ENCODE measurements at regions of chr14 and their contacts with region 1.

Region 1: DNA sequence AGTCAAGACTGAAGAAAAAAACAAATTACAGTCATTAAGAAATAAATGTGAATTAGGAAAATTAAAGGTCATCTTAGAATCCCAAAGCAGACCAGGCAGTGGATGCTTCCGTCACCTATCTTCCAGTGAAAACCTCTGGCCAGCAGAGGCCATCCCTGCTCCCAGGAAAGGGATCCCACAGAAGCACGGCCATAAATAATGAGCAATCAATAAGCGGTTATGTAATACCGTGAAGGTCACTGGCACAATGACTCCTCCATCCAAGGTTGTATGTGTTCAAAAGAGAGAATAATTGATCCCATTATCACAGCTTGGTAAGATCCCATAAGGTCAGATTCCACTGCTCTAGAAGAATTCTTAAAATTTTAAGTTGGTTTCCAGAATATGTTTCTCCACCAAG is 85.7 kb downstream of the PPP2R5E start:
- DNase-seq: no peak
- H3K4me3 ChIP-seq: no peak overlapping the region
- H3K27ac ChIP-seq: no peak overlapping the region
- H3K27me3 ChIP-seq: no peaks in the 10 kb centered on the region
- CTCF ChIP-seq: no peak

Region 2: DNA sequence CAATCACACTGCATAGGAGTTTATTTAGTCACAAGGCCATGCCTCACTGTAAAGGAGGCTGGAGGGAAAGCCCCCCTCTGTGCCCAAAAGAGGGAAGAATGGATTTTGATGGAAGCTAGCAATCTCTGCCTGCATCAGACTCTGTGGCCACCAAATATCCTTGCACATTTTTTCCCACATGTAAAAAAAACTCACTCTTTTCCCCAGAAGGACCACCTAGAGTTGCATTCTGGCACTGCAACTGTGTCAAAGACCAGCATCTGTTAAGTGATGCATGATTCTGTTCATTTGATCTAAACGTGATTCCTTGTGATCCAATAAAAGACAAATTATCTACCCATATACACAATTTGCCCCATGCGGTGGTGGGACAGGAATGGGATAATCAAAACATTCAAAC is 245.3 kb before region 1 on chr14:
- CTCF ChIA-PET with region 1: no interaction called
- POLR2A ChIA-PET with region 1: no interaction called
- DNase-seq: no peak
- H3K4me3 ChIP-seq: no peak overlapping the region
- H3K27ac ChIP-seq: no peak overlapping the region
- H3K27me3 ChIP-seq: no peaks in the 10 kb centered on the region
- CTCF ChIP-seq: peak; percentile 29; the same call in 1 of the 2 replicates

Region 3: GRCh38 chr14:63432228-63432627 is 25.3 kb before region 1 on chr14:
- CTCF ChIA-PET with region 1: no interaction called
- POLR2A ChIA-PET with region 1: no interaction called
- DNase-seq: no peak
- H3K4me3 ChIP-seq: no peak overlapping the region
- H3K27ac ChIP-seq: no peak overlapping the region
- H3K27me3 ChIP-seq: no peaks in the 10 kb centered on the region
- CTCF ChIP-seq: no peak

Region 4: GRCh38 chr14:63470962-63471793 is 13.7 kb after region 1 on chr14:
- CTCF ChIA-PET with region 1: no interaction called
- POLR2A ChIA-PET with region 1: no interaction called
- DNase-seq: peak; percentile 41
- H3K4me3 ChIP-seq: no peak overlapping the region
- H3K27ac ChIP-seq: no peak overlapping the region
- H3K27me3 ChIP-seq: no peaks in the 10 kb centered on the region
- CTCF ChIP-seq: no peak

Region 5: DNA sequence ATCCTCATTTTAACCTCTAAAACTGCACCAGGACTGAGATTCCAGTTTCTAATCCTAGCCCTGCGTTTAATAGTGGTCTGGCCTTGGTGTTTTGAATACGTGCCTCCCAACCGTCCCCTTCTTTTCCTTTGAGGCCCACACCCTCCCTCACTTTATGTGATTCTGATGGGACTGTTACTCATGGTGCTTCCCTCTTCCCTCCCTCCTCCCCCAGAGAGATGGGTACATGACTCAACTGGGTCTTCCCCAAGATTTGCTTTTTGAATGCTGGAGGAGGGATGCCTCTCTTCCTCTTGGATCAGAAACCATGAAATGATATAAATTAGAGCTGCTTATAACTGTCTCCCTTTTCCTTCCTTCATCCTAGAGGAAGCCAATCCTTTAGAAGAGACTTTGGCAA is 93.8 kb after region 1 on chr14:
- CTCF ChIA-PET with region 1: no interaction called
- POLR2A ChIA-PET with region 1: no interaction called
- DNase-seq: no peak
- H3K4me3 ChIP-seq: no peak overlapping the region
- H3K27ac ChIP-seq: no peak overlapping the region
- H3K27me3 ChIP-seq: no peaks in the 10 kb centered on the region
- CTCF ChIP-seq: no peak

Region 6: GRCh38 chr14:64040044-64040443 is 582.5 kb after region 1 on chr14:
- CTCF ChIA-PET with region 1: interaction called, 13 read pairs
- POLR2A ChIA-PET with region 1: no interaction called
- DNase-seq: peak; percentile 10
- H3K4me3 ChIP-seq: no peak overlapping the region
- H3K27ac ChIP-seq: no peak overlapping the region
- H3K27me3 ChIP-seq: no peaks in the 10 kb centered on the region
- CTCF ChIP-seq: peak; percentile 60

Measured in AG04450 (cell line).